ENCODE measurements at regions of chr22 and their contacts with region 1.

Region 1: GRCh38 chr22:25623310-25623734 is 58.8 kb downstream of the GRK3 start:
- DNase-seq: no peak
- ATAC-seq: no peak
- H3K4me3 ChIP-seq: no peak overlapping the region
- H3K27ac ChIP-seq: no peak overlapping the region
- H3K4me1 ChIP-seq: no peaks in the 10 kb centered on the region; a peak in 1 of 5 replicates
- H3K27me3 ChIP-seq: no peaks in the 10 kb centered on the region
- CTCF ChIP-seq: no peak
- EP300 ChIP-seq: no peak
- POLR2A ChIP-seq: no peak
- RAD21 ChIP-seq: no peak

Region 2: GRCh38 chr22:25318081-25318823 is 305.1 kb before region 1 on chr22:
- CTCF ChIA-PET with region 1: no interaction called
- POLR2A ChIA-PET with region 1: no interaction called
- in situ Hi-C with region 1: loop called (anchors 5 kb)
- intact Hi-C with region 1: no loop called
- DNase-seq: no peak
- ATAC-seq: no peak
- H3K4me3 ChIP-seq: no peak overlapping the region
- H3K27ac ChIP-seq: no peak overlapping the region
- H3K4me1 ChIP-seq: no peaks in the 10 kb centered on the region
- H3K27me3 ChIP-seq: no peaks in the 10 kb centered on the region
- CTCF ChIP-seq: no peak
- EP300 ChIP-seq: no peak
- POLR2A ChIP-seq: no peak
- RAD21 ChIP-seq: no peak

Region 3: GRCh38 chr22:25598609-25599008 is 24.7 kb before region 1 on chr22:
- CTCF ChIA-PET with region 1: no interaction called
- POLR2A ChIA-PET with region 1: no interaction called
- in situ Hi-C with region 1: no loop called
- intact Hi-C with region 1: no loop called
- DNase-seq: no peak
- ATAC-seq: no peak
- H3K4me3 ChIP-seq: no peak overlapping the region
- H3K27ac ChIP-seq: no peak overlapping the region
- H3K4me1 ChIP-seq: 0 out of 5 replicates have a peak, but pooled peaks cover 0 to 4% of the 10 kb centered on the region in 2 experiments
- H3K27me3 ChIP-seq: no peaks in the 10 kb centered on the region
- CTCF ChIP-seq: no peak
- EP300 ChIP-seq: no peak
- POLR2A ChIP-seq: no peak
- RAD21 ChIP-seq: no peak

Measured in K562 (cell line).